Dorsolateral prefrontal cortex (tissue), 120 donors: ENCODE measurements at regions of chr4 and their contacts with region 1.

Region 1: DNA sequence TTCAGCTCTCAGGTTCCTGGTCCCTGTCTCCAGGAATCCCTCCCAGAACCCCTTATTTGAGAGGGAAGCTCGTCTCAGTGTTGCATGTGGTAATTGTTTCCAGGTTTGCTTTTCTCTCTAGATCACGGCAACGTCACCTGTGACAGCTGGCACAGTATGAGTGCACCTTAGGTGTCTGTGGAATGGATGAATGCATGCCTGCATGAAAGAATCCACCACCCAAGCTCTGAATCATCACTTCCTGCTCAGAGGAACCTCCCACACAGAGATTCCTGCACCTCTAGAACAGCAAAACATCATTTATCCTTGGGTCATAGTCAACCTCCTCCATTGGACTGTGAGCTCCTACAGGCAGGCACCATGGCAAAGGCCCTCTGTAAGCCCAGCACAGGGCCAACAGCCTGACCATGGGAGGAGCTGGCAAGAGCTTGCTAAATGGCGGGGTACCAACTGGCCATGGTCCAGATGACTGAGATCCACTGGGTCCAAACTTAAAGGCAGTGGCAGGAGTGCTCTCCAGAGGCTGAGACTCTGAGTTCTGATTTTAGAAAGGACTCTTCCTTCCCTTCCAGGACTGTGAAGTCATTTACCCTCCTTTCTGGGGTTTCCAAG is 116.2 kb downstream of the SLC2A9 start:
- DNase-seq: peak in 1 of 10 donors; percentile 13
- H3K4me3 ChIP-seq: no peak overlapping the region
- H3K27ac ChIP-seq: no peak overlapping the region
- H3K27me3 ChIP-seq: no peaks in the 10 kb centered on the region
- CTCF ChIP-seq: no peak

Region 2: GRCh38 chr4:10013722-10014121 is 108.6 kb after region 1 on chr4:
- intact Hi-C with region 1: loop called in 1 of 2 experiments (anchors 5 kb)
- DNase-seq: peak in 1 of 10 donors; percentile 52
- H3K4me3 ChIP-seq: no peak overlapping the region
- H3K27ac ChIP-seq: no peak overlapping the region
- H3K27me3 ChIP-seq: no peaks in the 10 kb centered on the region
- CTCF ChIP-seq: peak in 54 of 56 donors; percentile 18 to 63 (median 46)